Panc1 (cell line): ENCODE measurements at regions of chr1 and their contacts with region 1.

Region 1: GRCh38 chr1:227946624-227947385 is 927 bp downstream of the WNT9A start:
- DNase-seq: no peak
- ATAC-seq: peak; percentile 81
- H3K4me3 ChIP-seq: peak overlapping the region; percentile 71 to 91
- H3K27ac ChIP-seq: peak overlapping the region; percentile 90
- H3K4me1 ChIP-seq: peaks cover 40% of the 10 kb centered on the region
- H3K27me3 ChIP-seq: no peaks in the 10 kb centered on the region
- CTCF ChIP-seq: peak; percentile 94

Region 2: GRCh38 chr1:227482023-227482299 is 464.8 kb before region 1 on chr1:
- CTCF ChIA-PET with region 1: no interaction called
- POLR2A ChIA-PET with region 1: no interaction called
- in situ Hi-C with region 1: no loop called
- intact Hi-C with region 1: loop called (anchors 5 kb)
- DNase-seq: no peak
- ATAC-seq: no peak
- H3K4me3 ChIP-seq: no peak overlapping the region
- H3K27ac ChIP-seq: no peak overlapping the region
- H3K4me1 ChIP-seq: no peaks in the 10 kb centered on the region
- H3K27me3 ChIP-seq: 0 out of 2 replicates have a peak, but pooled peaks cover 2% of the 10 kb centered on the region
- CTCF ChIP-seq: no peak

Region 3: DNA sequence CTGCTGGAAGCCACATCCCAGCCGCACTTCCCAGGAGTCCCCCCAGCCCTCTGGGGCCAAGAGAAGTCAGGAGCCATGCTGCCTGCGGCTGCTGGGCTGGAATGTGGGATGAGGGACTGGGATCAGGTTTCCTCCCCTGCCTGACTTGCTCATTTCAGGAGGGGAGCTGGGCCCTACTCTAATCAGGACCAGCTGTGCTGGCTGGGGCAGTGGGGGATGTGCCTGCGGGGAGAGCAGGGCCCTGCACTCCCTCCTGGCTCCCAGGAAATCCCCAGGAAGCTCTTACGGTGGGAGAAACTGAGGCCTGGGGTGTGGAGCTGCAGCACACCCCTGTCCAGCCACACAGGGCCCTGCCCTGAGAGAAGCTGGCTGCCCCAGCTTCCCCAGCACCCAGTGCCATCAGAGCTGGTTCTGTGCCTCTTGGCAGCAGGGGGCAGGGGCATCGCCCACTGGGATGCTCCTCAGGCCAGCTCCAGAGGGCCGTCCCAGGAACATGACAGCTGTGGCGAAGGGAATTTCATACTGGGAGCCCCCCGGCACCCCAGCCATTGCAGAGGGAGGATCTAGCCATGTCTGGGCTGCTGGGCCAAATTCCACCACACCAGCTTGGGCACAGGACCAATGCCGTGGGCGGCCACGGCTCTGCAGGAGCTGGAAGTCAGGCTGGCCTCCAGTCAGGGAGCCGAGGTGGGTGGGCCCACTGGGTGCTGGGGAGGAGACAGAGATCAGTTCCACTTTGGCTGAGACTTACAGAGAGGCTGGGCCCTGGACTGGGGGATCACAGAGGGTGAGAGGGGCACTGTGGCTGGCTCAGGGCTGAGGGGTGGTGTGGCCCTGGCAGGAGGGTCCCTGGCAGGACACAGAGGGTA is 152.6 kb before region 1 on chr1:
- CTCF ChIA-PET with region 1: interaction called, 12 read pairs
- POLR2A ChIA-PET with region 1: no interaction called
- in situ Hi-C with region 1: no loop called
- intact Hi-C with region 1: loop called (anchors 10 kb)
- DNase-seq: no peak
- ATAC-seq: peak; percentile 54
- H3K4me3 ChIP-seq: no peak overlapping the region
- H3K27ac ChIP-seq: peak overlapping the region; percentile 48
- H3K4me1 ChIP-seq: peaks cover 32% of the 10 kb centered on the region
- H3K27me3 ChIP-seq: no peaks in the 10 kb centered on the region
- CTCF ChIP-seq: no peak

Region 4: DNA sequence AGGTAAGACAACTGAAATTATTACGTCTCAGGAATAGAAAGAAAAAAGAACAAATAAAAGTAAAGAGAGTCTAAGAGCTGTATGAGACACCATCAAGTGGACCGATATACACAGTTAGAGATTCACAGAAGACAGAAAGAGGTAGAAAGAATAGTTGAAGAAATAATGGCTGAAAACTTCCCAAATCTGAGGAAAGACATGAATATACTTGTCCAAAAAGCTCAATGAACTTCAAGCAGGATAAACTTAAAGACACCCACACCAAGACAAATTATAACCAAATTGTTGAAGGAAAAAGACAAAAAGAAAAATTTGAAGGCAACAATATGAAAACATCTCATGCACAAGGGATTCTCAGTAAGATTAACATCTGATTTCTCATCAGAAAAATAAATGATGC is 40.4 kb after region 1 on chr1:
- CTCF ChIA-PET with region 1: no interaction called
- POLR2A ChIA-PET with region 1: no interaction called
- in situ Hi-C with region 1: no loop called
- intact Hi-C with region 1: no loop called
- DNase-seq: no peak
- ATAC-seq: no peak
- H3K4me3 ChIP-seq: no peak overlapping the region
- H3K27ac ChIP-seq: no peak overlapping the region
- H3K4me1 ChIP-seq: no peaks in the 10 kb centered on the region
- H3K27me3 ChIP-seq: peaks cover 6% of the 10 kb centered on the region; the same call in 1 of the 2 replicates
- CTCF ChIP-seq: no peak